Sigmoid colon (tissue), 7 donors: ENCODE measurements at regions of chr2 and their contacts with region 1.

Region 1: GRCh38 chr2:86623651-86624541 is at the start of gene RNF103:
- DNase-seq: peak; percentile 98
- H3K4me3 ChIP-seq: peak within 1 kb of the TSS; percentile 84 to 88 (median 86)
- H3K27ac ChIP-seq: peak within 1 kb of the TSS; percentile 95 to 97 (median 96)
- H3K4me1 ChIP-seq: peaks cover 0 to 31% (median 22%) of the 10 kb centered on the region in 4 donors
- H3K27me3 ChIP-seq: no peaks in the 10 kb centered on the region
- CTCF ChIP-seq: no peak
- EP300 ChIP-seq: peak in 1 of 4 donors; percentile 18
- POLR2A ChIP-seq: peak; percentile 97 to 98
- total RNA-seq, gene RNF103: 36.6 to 45.6 (median 41.0) TPM

Region 2: DNA sequence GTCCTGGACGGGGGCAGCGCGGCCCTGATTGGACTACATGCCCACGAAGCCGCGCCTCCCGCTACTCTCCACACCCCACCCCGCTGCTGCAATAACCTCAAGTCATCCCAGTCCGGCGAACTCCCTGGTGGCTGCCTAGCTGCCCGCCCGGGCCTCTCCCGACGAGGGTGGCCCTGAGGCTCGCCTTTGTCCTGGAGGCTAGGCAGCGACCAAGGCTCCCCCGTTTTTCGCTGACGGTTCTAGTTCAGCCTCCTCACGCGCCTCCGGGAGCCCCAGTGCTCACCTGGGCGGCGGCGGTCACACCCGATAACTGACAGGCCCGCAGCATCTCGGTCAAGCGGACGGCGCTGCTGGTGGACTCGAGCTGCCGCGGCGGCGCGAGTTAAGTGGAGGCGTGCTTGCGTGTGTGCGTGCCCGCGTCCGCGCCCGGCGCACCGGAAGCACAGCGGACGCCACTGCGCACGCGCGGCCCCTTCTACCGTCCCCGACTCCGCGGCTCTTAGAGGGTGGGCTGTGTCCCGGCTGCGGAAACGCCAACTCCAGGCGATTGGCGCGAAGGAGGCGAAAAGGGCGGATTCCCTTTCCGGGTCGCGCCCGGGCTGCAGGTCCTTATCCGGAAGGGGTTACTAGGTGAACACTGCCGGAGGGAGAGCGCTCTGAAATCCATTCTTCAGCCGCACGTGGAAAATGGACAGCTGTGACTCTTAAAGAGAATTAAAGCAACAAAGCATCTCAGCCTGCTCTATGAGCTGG is 428.7 kb before region 1 on chr2 and contains the start of gene IMMT:
- intact Hi-C with region 1: loop called (anchors 10 kb)
- DNase-seq: peak; percentile 98
- H3K4me3 ChIP-seq: peak within 1 kb of the TSS; percentile 85 to 96 (median 90)
- H3K27ac ChIP-seq: peak within 1 kb of the TSS; percentile 99 to 100 (median 100)
- H3K4me1 ChIP-seq: peaks cover 0 to 60% (median 55%) of the 10 kb centered on the region in 4 donors
- H3K27me3 ChIP-seq: no peaks in the 10 kb centered on the region
- CTCF ChIP-seq: no peak
- EP300 ChIP-seq: peak in 2 of 4 donors; percentile 5 to 16
- POLR2A ChIP-seq: peak; percentile 89 to 90
- total RNA-seq, gene IMMT: 46.1 to 48.2 (median 48.2) TPM

Region 3: DNA sequence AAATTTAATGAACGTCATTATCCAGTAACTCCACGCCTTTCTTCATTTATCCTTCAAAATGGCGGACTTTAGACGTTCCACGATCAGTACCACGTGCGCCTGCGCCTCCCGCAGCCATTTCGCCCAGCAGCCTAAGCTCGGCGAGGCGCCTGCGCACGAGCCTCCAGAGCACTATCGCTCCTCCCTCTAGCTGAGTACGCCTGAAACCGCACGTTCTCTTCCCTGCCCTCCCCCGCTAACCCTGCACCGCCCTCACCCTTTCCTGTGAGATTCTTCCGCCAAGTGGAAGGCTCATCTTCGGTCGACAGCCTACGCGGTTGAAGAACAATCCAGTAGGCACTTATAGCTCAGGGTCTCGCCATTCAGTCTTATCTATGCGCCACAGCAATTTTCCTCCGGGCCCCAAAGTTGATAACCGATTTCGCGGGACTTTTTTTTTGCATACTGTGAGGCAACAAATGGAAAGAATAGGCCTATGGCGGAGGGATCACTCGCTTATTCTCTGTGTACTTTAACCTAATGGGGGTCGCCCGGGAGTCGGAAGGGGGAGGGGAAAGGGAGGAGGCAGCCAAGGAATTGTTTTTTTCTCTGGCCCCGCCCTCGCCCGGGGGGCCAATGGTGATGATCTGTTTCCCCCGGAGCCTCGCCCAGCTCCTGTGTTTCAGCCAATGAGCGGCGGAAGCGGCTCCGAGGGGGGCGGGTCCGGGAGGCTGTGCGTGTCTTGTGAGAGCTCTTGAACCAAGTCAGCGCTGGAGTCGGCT is 183.1 kb before region 1 on chr2 and contains the start of gene KDM3A:
- intact Hi-C with region 1: loop called (anchors 5 kb)
- DNase-seq: peak; percentile 100
- H3K4me3 ChIP-seq: peak within 1 kb of the TSS; percentile 62 to 88 (median 80)
- H3K27ac ChIP-seq: peak within 1 kb of the TSS; percentile 95 to 98 (median 97)
- H3K4me1 ChIP-seq: peaks cover 2 to 31% (median 30%) of the 10 kb centered on the region in 4 donors
- H3K27me3 ChIP-seq: no peaks in the 10 kb centered on the region
- CTCF ChIP-seq: no peak
- EP300 ChIP-seq: peak in 3 of 4 donors; percentile 56 to 64 (median 60)
- POLR2A ChIP-seq: peak; percentile 88 to 94
- total RNA-seq, gene KDM3A: 31.6 to 61.2 (median 49.8) TPM

Region 4: GRCh38 chr2:86562922-86563649 is 60.8 kb before region 1 on chr2 and contains the start of gene CHMP3:
- intact Hi-C with region 1: loop called (anchors 1 kb)
- DNase-seq: peak; percentile 99
- H3K4me3 ChIP-seq: peak within 1 kb of the TSS; percentile 64 to 94 (median 84)
- H3K27ac ChIP-seq: peak within 1 kb of the TSS; percentile 97 to 100 (median 98)
- H3K4me1 ChIP-seq: peaks cover 0 to 24% (median 18%) of the 10 kb centered on the region in 4 donors
- H3K27me3 ChIP-seq: no peaks in the 10 kb centered on the region
- CTCF ChIP-seq: no peak
- EP300 ChIP-seq: no peak
- POLR2A ChIP-seq: peak; percentile 63 to 72
- total RNA-seq, gene CHMP3: 101 to 154 (median 138) TPM

Region 5: GRCh38 chr2:86675511-86676015 is 51.7 kb after region 1 on chr2:
- intact Hi-C with region 1: loop called (anchors 2 kb)
- DNase-seq: peak; percentile 79
- H3K4me3 ChIP-seq: no peak overlapping the region
- H3K27ac ChIP-seq: peak overlapping the region in 3 of 4 donors; percentile 67 to 82 (median 71)
- H3K4me1 ChIP-seq: peaks cover 0 to 44% (median 33%) of the 10 kb centered on the region in 4 donors
- H3K27me3 ChIP-seq: no peaks in the 10 kb centered on the region
- CTCF ChIP-seq: no peak
- EP300 ChIP-seq: no peak
- POLR2A ChIP-seq: no peak